A673 (cell line): ENCODE measurements at regions of chrX and their contacts with region 1.

Region 1: DNA sequence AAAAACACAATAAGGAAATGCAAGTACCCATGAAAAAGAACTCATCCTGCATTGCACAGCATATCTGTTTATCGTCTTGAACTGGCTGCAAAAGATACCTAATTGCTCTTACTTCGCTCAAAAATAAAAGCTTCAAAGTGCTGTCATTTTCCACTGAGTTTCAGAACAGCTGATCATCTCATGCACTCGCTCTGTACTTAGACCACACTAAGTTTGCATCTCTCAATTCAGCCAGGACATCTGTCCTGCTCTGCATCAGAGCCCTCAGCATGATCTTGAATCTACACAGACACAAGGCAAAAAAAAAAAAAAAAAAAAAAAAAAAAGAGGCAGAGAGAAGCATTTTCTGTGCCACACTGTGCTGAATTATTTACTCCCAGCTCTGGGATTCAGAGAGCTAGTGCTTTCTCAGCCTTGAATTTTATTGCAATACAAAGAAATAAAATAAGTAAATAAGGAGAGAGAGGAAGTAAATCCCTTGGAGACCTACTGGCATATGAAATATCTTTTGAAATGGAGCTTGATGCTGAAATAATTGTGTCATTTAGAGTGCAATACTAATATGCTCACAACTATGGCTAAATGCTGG is 81.3 kb downstream of the PPP1R2C start:
- DNase-seq: no peak
- H3K4me3 ChIP-seq: no peak overlapping the region
- H3K27ac ChIP-seq: no peak overlapping the region
- H3K4me1 ChIP-seq: no peaks in the 10 kb centered on the region
- H3K27me3 ChIP-seq: no peaks in the 10 kb centered on the region
- CTCF ChIP-seq: no peak

Region 2: GRCh38 chrX:41946989-41947612 is 749.5 kb before region 1 on chrX:
- CTCF ChIA-PET with region 1: no interaction called
- POLR2A ChIA-PET with region 1: no interaction called
- intact Hi-C with region 1: no loop called
- DNase-seq: no peak
- H3K4me3 ChIP-seq: no peak overlapping the region
- H3K27ac ChIP-seq: no peak overlapping the region
- H3K4me1 ChIP-seq: no peaks in the 10 kb centered on the region
- H3K27me3 ChIP-seq: no peaks in the 10 kb centered on the region
- CTCF ChIP-seq: no peak

Region 3: GRCh38 chrX:42602566-42602965 is 94.1 kb before region 1 on chrX:
- CTCF ChIA-PET with region 1: no interaction called
- POLR2A ChIA-PET with region 1: interaction called, 10 read pairs
- intact Hi-C with region 1: no loop called
- DNase-seq: no peak
- H3K4me3 ChIP-seq: no peak overlapping the region
- H3K27ac ChIP-seq: no peak overlapping the region
- H3K4me1 ChIP-seq: no peaks in the 10 kb centered on the region
- H3K27me3 ChIP-seq: no peaks in the 10 kb centered on the region
- CTCF ChIP-seq: no peak

Region 4: GRCh38 chrX:42746606-42747005 is 50.0 kb after region 1 on chrX:
- CTCF ChIA-PET with region 1: no interaction called
- POLR2A ChIA-PET with region 1: no interaction called
- intact Hi-C with region 1: no loop called
- DNase-seq: no peak
- H3K4me3 ChIP-seq: no peak overlapping the region
- H3K27ac ChIP-seq: no peak overlapping the region
- H3K4me1 ChIP-seq: no peaks in the 10 kb centered on the region
- H3K27me3 ChIP-seq: no peaks in the 10 kb centered on the region
- CTCF ChIP-seq: no peak

Region 5: DNA sequence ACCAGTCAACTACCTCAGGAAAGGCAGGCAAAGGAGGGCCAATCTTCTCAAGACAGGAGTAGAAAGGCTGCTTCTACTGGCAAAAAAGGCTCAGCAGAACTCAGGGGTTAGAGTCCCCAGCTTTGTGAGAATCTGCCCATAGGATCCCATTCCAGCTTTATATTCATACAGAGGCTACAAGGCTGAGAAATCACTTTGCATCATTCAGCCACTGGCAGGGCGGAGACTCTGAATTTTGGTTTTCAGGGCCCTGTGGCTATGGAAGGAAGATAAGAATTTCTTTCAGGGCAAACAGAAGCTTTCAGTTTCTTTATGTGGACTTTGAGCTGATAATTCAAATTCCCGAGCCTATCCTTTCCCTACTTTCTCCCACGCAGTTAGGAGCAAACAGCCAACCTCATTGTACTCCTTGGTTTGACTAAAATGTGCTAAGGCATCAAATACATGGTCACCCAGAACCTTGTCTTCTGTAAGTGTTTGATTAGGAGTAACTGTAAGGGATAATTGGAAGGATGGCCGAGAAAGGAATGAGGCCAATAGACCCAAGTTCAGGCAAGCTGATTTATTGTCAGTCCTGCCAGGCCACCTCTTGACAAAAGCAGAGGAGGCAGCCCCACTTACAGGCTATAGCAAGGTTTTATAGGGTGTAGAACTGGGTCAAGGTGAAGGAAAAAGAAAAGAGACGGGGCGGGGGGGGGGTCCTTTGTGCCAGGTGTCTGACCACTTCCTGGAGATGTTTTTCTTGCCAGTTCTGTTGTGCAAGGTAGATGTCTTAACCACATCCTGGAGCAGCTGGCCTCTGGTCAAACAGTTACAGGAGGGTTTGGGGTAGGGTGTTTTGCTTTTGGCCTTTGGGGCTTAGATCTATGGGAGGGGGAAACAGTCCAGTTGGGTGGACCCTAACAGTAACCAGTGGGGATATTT is 246.7 kb after region 1 on chrX:
- CTCF ChIA-PET with region 1: no interaction called
- POLR2A ChIA-PET with region 1: no interaction called
- intact Hi-C with region 1: no loop called
- DNase-seq: no peak
- H3K4me3 ChIP-seq: no peak overlapping the region
- H3K27ac ChIP-seq: no peak overlapping the region
- H3K4me1 ChIP-seq: no peaks in the 10 kb centered on the region
- H3K27me3 ChIP-seq: no peaks in the 10 kb centered on the region
- CTCF ChIP-seq: no peak